Adrenal gland (tissue), 19 donors: ENCODE measurements at regions of chr7 and their contacts with region 1.

Region 1: DNA sequence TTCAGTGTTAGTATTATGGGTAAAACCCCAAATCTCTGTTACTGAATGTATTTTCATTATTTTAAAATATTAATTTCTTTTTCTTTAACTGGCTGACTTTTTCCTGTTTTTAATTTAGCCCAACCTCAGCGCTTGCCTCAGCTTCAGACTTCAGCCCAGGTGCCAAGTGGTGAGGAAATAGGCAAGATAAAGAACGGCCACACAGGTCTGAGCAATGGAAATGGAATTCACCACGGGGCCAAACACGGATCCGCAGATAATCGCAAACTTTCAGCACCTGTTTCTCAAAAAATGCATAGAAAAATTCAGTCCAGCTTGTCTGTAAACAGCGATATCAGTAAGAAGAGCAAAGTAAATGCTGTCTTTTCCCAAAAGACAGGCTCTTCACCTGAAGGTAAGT is 57.5 kb downstream of the MDFIC start:
- DNase-seq: peak; percentile 64 to 86 (median 83)
- H3K4me3 ChIP-seq: no peak overlapping the region
- H3K27ac ChIP-seq: peak overlapping the region in 4 of 5 donors; percentile 37 to 63 (median 54)
- H3K4me1 ChIP-seq: peaks cover 17 to 33% of the 10 kb centered on the region in 2 donors
- H3K27me3 ChIP-seq: no peaks in the 10 kb centered on the region
- CTCF ChIP-seq: no peak
- POLR2A ChIP-seq: peak in 1 of 2 donors; percentile 24

Region 2: DNA sequence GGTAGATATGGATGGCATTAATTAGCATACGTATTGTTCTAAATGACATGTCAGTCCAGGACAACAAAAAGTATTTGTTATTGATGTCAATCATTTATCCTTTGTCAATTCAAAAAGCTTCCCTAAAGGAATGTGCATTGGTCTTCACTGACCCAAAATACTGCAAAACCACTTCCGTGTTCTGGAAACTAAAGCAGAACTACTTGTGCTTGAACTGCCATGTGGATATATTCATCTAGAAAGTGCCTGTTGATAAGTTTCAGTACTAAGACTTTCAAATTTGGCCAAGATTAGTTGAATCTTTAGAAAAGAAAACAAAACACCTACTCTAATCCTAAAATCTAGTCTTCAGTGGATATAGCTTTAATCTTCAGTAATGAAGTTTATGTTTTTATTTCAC is 818.5 kb before region 1 on chr7:
- intact Hi-C with region 1: no loop called
- DNase-seq: no peak
- H3K4me3 ChIP-seq: no peak overlapping the region
- H3K27ac ChIP-seq: no peak overlapping the region
- H3K4me1 ChIP-seq: no peaks in the 10 kb centered on the region
- H3K27me3 ChIP-seq: no peaks in the 10 kb centered on the region
- CTCF ChIP-seq: no peak
- POLR2A ChIP-seq: no peak

Region 3: GRCh38 chr7:114832906-114833595 is 146.3 kb before region 1 on chr7:
- intact Hi-C with region 1: no loop called
- DNase-seq: no peak
- H3K4me3 ChIP-seq: no peak overlapping the region
- H3K27ac ChIP-seq: no peak overlapping the region
- H3K4me1 ChIP-seq: no peaks in the 10 kb centered on the region
- H3K27me3 ChIP-seq: no peaks in the 10 kb centered on the region
- CTCF ChIP-seq: no peak
- POLR2A ChIP-seq: no peak

Region 4: DNA sequence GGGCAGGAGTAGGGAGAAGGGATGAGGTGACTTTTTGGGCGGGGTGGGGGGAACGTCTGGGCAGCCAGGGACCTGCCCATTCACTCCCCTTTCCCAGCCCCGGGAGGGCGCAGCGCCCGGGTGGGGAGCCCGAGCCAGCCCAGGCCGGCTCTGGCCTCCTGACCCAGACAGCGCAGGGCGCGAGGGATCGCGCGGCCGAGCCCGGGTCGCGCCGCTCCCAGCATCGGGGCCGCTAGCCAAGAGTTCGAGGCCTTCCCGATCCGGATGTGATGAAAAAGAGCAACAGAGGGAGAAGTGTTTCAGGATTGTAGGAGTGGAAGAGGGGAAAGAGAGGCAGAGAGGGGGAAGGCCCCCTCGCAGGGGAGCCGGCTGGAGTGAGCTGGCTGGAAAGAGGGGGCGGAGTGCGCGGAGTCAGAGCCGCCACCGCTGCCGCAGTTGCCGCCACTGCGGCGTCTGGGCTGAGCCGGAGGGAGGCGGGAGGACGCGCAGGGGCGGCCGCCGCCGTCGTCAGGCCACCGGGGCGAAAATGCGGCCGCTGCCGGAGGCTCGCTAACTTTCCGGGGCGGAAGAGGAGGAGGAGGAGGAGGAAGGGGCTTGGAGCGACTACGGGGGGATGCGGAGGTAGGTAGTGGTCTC is 57.3 kb before region 1 on chr7 and contains the start of gene MDFIC:
- intact Hi-C with region 1: loop called in 1 of 2 experiments (anchors 10 kb)
- DNase-seq: peak; percentile 60 to 77 (median 64)
- H3K4me3 ChIP-seq: peak within 1 kb of the TSS; percentile 12 to 83 (median 66)
- H3K27ac ChIP-seq: peak within 1 kb of the TSS; percentile 53 to 90 (median 85)
- H3K4me1 ChIP-seq: peaks cover 0 to 26% of the 10 kb centered on the region in 2 donors
- H3K27me3 ChIP-seq: no peaks in the 10 kb centered on the region
- CTCF ChIP-seq: peak in 1 of 6 experiments; percentile 1
- POLR2A ChIP-seq: peak; percentile 25 to 53
- total RNA-seq, gene MDFIC: 46.7 to 172 (median 54.4) TPM